Activated CD4-positive, alpha-beta T cell treated with anti-CD3 and anti-CD28 coated beads for 36 hours (primary cell): ENCODE measurements at regions of chr9 and their contacts with region 1.

Region 1: GRCh38 chr9:30744871-30745270 is 1639.6 kb upstream of the ACO1 start:
- DNase-seq: no peak
- ATAC-seq: no peak
- H3K4me3 Mint-ChIP-seq: no peak overlapping the region
- H3K27ac Mint-ChIP-seq: no peak overlapping the region
- H3K4me1 Mint-ChIP-seq: no peaks in the 10 kb centered on the region
- H3K27me3 Mint-ChIP-seq: no peaks in the 10 kb centered on the region

Region 2: GRCh38 chr9:30688801-30689200 is 56.1 kb before region 1 on chr9:
- CTCF ChIA-PET with region 1: no interaction called
- POLR2A ChIA-PET with region 1: no interaction called
- intact Hi-C with region 1: loop called in 1 of 2 experiments (anchors 10 kb)
- DNase-seq: no peak
- ATAC-seq: no peak
- H3K4me3 Mint-ChIP-seq: no peak overlapping the region
- H3K27ac Mint-ChIP-seq: no peak overlapping the region
- H3K4me1 Mint-ChIP-seq: no peaks in the 10 kb centered on the region
- H3K27me3 Mint-ChIP-seq: no peaks in the 10 kb centered on the region

Region 3: GRCh38 chr9:30713243-30713642 is 31.6 kb before region 1 on chr9:
- CTCF ChIA-PET with region 1: no interaction called
- POLR2A ChIA-PET with region 1: no interaction called
- intact Hi-C with region 1: no loop called
- DNase-seq: no peak
- ATAC-seq: no peak
- H3K4me3 Mint-ChIP-seq: no peak overlapping the region
- H3K27ac Mint-ChIP-seq: no peak overlapping the region
- H3K4me1 Mint-ChIP-seq: no peaks in the 10 kb centered on the region
- H3K27me3 Mint-ChIP-seq: no peaks in the 10 kb centered on the region